ENCODE measurements at regions of chr1 and their contacts with region 1.

Region 1: DNA sequence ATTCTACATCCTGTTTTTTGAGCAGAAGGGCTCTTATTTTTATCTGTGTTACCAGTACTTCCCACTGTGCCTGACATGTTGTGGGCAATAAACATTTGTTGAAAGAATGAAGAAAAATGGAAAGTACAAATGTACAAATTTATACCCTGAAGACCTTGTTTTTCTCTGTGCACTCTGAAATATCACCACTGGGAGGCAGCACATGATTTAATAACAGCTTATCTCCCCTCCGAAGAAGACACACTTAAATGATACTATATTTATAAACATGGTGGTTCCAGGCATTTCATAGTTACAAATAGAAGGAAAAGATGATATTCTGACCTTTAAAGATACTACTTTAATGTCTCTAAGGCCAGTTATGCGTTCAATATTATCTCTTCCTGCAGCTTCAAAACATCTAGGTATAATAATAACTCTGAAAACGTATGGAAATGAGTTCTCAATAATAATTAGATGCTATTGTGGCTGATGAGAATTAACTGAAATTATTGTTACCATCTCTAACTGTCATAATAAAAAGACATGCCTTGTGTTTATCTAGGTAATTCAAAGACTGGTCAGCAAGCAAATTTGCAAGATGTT is 12.8 kb downstream of the DYNLT5 start:
- DNase-seq: peak in 2 of 5 donors; percentile 18 to 21
- ATAC-seq: peak in 1 of 4 donors; percentile 52
- H3K4me3 ChIP-seq: no peak overlapping the region
- H3K27ac ChIP-seq: no peak overlapping the region
- H3K4me1 ChIP-seq: peaks cover 0 to 4% (median 0%) of the 10 kb centered on the region in 12 donors
- H3K27me3 ChIP-seq: no peaks in the 10 kb centered on the region
- CTCF ChIP-seq: peak; percentile 62 to 84 (median 78)
- POLR2A ChIP-seq: no peak

Region 2: GRCh38 chr1:66916320-66916719 is 151.2 kb after region 1 on chr1:
- intact Hi-C with region 1: loop called in 4 of 10 experiments (anchors 10 kb)
- DNase-seq: no peak
- ATAC-seq: no peak
- H3K4me3 ChIP-seq: no peak overlapping the region
- H3K27ac ChIP-seq: no peak overlapping the region
- H3K4me1 ChIP-seq: peaks cover 0 to 4% (median 0%) of the 10 kb centered on the region in 12 donors
- H3K27me3 ChIP-seq: no peaks in the 10 kb centered on the region
- CTCF ChIP-seq: no peak
- POLR2A ChIP-seq: no peak

Region 3: GRCh38 chr1:66944330-66945274 is 179.5 kb after region 1 on chr1:
- intact Hi-C with region 1: loop called in 1 of 10 experiments (anchors 10 kb)
- DNase-seq: peak in 1 of 5 donors; percentile 37
- ATAC-seq: peak in 3 of 4 donors; percentile 68 to 87 (median 74)
- H3K4me3 ChIP-seq: no peak overlapping the region
- H3K27ac ChIP-seq: peak overlapping the region in 2 of 12 donors; percentile 28
- H3K4me1 ChIP-seq: peaks cover 0 to 43% (median 16%) of the 10 kb centered on the region in 12 donors
- H3K27me3 ChIP-seq: no peaks in the 10 kb centered on the region
- CTCF ChIP-seq: no peak
- POLR2A ChIP-seq: no peak

Region 4: DNA sequence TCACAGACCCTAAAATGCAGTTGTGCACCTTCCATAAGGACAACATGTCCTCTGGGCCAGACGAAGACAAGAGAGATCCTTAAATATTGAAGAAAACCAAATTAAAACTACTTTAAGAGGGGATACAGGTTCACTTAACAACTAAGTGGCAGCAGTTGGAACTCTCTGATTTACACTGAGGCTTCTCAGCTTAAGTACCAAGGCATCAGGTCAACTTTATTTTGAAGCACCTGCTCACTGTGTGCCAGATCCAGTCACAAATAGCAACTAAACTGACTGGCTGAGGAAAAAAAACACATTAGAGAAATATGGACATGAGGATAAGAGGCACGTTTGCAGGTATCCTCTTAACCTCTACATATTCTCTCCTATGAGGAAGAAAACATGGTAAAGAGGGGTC is 255.7 kb after region 1 on chr1:
- intact Hi-C with region 1: no loop called
- DNase-seq: no peak
- ATAC-seq: no peak
- H3K4me3 ChIP-seq: no peak overlapping the region
- H3K27ac ChIP-seq: peak overlapping the region in 7 of 12 donors; percentile 17 to 84 (median 68)
- H3K4me1 ChIP-seq: peaks cover 3 to 28% (median 20%) of the 10 kb centered on the region in 12 donors
- H3K27me3 ChIP-seq: no peaks in the 10 kb centered on the region
- CTCF ChIP-seq: no peak
- POLR2A ChIP-seq: no peak

Region 5: GRCh38 chr1:67053785-67054772 is 289.0 kb after region 1 on chr1 and contains the start of gene SLC35D1:
- intact Hi-C with region 1: loop called in 1 of 10 experiments (anchors 10 kb)
- DNase-seq: peak; percentile 75 to 85 (median 81)
- ATAC-seq: peak; percentile 76 to 94 (median 84)
- H3K4me3 ChIP-seq: peak within 1 kb of the TSS; percentile 70 to 95 (median 80)
- H3K27ac ChIP-seq: peak within 1 kb of the TSS; percentile 88 to 99 (median 96)
- H3K4me1 ChIP-seq: peaks cover 0 to 28% (median 22%) of the 10 kb centered on the region in 12 donors
- H3K27me3 ChIP-seq: no peaks in the 10 kb centered on the region
- CTCF ChIP-seq: no peak
- POLR2A ChIP-seq: peak in 1 of 2 donors; percentile 81
- total RNA-seq, gene SLC35D1: 2.9 to 6.8 (median 4.2) TPM

Region 6: DNA sequence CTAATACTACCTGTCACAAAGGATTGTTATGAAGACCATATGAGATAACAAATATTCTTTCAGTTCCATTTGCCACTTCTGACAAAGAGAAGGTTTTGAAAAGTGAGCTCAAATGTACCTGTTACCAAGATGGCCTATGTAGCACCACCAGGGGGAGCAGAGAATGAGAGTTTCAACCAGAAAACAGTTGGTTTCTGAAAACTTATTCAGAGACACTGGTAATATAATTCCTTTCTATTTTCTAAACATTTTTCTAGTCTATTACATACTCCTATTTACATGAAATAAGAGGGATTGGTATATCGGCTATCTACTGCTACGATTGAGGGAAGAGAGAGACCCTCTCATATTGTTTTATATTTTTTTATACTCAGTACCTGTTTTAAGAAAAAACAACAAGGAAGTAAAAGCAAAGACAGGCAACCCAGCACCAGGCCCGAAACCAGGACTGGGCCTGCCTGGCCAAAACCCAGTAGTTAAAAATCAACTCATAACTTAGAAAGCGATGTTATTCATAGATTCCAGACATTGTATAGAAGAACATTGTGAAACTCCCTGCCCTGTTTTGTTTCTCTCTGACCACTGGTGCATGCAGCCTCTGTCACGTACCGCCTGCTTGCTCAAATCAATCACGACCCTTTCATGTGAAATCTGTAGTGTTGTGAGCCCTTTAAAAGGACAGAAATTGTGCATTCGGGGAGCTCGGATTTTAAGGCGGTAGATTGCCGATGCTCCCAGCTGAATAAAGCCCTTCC is 449.5 kb after region 1 on chr1:
- intact Hi-C with region 1: loop called in 6 of 10 experiments (anchors 1 to 10 kb)
- DNase-seq: no peak
- ATAC-seq: no peak
- H3K4me3 ChIP-seq: no peak overlapping the region
- H3K27ac ChIP-seq: no peak overlapping the region
- H3K4me1 ChIP-seq: peaks cover 0 to 4% (median 0%) of the 10 kb centered on the region in 12 donors
- H3K27me3 ChIP-seq: no peaks in the 10 kb centered on the region
- CTCF ChIP-seq: peak; percentile 16 to 55 (median 36)
- POLR2A ChIP-seq: no peak